HCT116 (cell line): ENCODE measurements at regions of chr1 and their contacts with region 1.

Region 1: GRCh38 chr1:27979151-27979858 is 19.5 kb downstream of the XKR8 start:
- DNase-seq: peak; percentile 35
- ATAC-seq: peak; percentile 87
- H3K4me3 ChIP-seq: no peak overlapping the region
- H3K27ac ChIP-seq: no peak overlapping the region
- H3K4me1 ChIP-seq: no peaks in the 10 kb centered on the region
- H3K27me3 ChIP-seq: no peaks in the 10 kb centered on the region
- CTCF ChIP-seq: peak; percentile 34 to 87 (median 52); a peak in 5 of 6 replicates
- POLR2A ChIP-seq: no peak
- RAD21 ChIP-seq: peak; percentile 90

Region 2: GRCh38 chr1:27940297-27940696 is 39.0 kb before region 1 on chr1:
- CTCF ChIA-PET with region 1: interaction called, 9 read pairs
- POLR2A ChIA-PET with region 1: no interaction called
- RAD21 ChIA-PET with region 1: no interaction called
- intact Hi-C with region 1: loop called (anchors 1 kb)
- DNase-seq: no peak
- ATAC-seq: peak; percentile 85
- H3K4me3 ChIP-seq: no peak overlapping the region
- H3K27ac ChIP-seq: no peak overlapping the region
- H3K4me1 ChIP-seq: peaks cover 0 to 14% of the 10 kb centered on the region in 2 experiments; a peak in 2 of 4 replicates
- H3K27me3 ChIP-seq: no peaks in the 10 kb centered on the region
- CTCF ChIP-seq: peak; percentile 44 to 67 (median 54); a peak in 5 of 6 replicates
- POLR2A ChIP-seq: no peak
- RAD21 ChIP-seq: peak; percentile 67

Region 3: DNA sequence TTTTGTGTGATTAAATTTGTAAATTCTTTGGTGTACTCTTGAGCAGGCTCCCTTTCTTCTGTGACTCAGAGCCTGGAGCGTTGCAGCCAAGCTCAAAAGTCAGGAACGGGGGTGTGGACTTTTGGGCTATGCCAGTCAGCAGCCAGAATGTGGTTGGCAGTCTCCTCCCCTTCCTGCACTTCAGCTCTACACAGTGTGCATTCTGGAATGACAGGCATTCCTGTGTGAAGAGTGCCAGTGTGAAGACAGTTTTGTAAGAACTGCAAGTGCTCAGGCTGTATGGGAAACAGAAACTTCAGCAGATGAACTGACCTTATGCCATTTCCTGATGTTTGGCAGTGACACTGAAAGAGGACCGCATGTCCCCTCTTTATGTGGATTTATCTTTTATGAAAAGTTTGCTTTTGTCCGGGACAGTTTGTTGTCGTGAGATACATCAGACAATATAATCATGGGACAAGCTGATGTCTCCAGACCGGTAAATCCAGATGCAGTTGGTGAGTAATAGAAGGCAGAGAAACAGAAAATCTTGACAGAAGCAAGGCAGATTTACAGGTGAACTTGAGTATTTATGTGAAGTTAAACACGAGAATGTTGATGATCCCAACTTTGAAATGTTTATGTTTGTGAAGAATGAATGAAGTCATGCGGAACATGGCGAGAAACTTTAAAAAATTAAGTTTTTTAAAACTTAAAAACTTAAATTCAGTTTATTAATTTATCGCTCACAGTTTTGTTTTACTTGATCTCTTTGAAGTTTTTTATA is 458.8 kb after region 1 on chr1:
- CTCF ChIA-PET with region 1: no interaction called
- POLR2A ChIA-PET with region 1: no interaction called
- RAD21 ChIA-PET with region 1: no interaction called
- intact Hi-C with region 1: no loop called
- DNase-seq: peak; percentile 92
- ATAC-seq: peak; percentile 97
- H3K4me3 ChIP-seq: peak overlapping the region; percentile 3 to 49
- H3K27ac ChIP-seq: peak overlapping the region; percentile 88
- H3K4me1 ChIP-seq: peaks cover 29 to 50% of the 10 kb centered on the region in 2 experiments
- H3K27me3 ChIP-seq: no peaks in the 10 kb centered on the region
- CTCF ChIP-seq: no peak
- POLR2A ChIP-seq: peak; percentile 73
- RAD21 ChIP-seq: no peak